Tibial artery (tissue), 4 donors: ENCODE measurements at regions of chr2 and their contacts with region 1.

Region 1: DNA sequence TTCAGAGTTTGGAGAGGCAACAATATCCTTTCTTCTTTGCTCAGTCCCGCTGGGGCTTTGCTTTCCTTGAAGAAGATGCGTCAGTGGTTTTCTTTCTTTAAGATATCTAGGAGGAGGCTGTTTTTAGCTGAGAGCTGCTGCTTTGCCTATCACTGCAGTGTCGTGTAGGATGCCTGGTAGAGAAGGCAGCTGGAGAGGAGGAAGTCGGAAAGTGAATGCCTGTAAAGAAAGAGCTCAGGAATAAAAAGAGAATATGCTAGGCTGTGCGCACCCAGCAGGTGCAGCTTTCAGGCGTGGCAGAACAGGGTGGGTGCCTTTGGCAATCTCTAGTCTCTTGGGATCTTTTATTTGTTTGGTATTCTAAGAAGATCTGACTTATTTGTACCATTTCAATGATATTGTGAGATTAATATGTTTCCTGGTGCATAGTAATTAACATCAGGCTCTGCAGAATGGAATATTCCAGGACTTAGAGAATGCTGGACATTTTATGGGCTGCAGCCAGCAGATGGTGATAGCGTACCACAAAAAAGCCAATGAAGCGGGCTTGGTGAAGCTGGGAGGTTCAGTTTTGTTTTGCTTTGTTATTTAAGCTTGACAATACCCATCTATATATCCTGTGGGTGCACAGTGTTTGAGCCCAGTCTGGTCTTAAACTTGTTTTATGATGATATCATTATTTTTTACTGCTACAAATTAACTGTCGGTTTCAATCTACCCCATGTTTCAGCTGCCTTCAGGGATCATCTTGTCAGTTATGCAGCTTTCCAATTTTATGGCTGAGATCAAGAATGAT is 34.9 kb downstream of the CAVIN2 start:
- DNase-seq: peak in 1 of 2 donors; percentile 53
- H3K4me3 ChIP-seq: peak overlapping the region in 1 of 2 donors; percentile 4
- H3K27ac ChIP-seq: no peak overlapping the region
- H3K4me1 ChIP-seq: no peaks in the 10 kb centered on the region
- H3K27me3 ChIP-seq: no peaks in the 10 kb centered on the region
- CTCF ChIP-seq: peak; percentile 72 to 81

Region 2: DNA sequence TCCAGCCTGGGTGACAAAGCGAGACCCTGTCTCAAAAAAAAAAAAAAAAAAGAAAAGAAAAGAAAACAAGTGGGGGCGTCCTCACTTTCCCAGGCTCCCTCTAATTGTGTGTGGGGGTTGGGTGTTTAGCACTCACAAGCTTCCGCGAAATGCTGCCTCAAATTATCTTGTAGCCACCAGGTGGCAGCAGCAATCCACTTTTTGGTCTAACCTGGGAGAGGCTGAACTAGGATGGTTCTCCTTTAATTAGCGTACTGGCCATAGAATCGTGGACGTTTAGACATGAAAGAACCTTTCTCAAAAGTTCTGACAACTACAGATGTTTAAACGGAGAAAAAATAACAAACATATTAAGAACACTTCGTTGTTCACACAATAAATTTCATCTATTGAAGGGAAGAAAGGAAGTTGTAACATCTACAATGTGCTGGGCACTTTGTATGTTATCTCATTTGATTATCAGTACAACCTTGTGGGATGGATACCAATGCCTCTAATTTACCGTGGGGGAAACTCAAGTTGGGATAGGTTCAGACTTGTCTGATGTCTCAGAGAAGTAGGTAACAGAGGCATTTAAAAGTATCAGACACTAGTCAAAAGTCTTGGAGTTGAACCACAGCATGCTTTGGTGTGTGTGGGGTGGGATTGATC is 256.8 kb before region 1 on chr2:
- intact Hi-C with region 1: loop called (anchors 10 kb)
- DNase-seq: peak; percentile 83 to 85
- H3K4me3 ChIP-seq: no peak overlapping the region
- H3K27ac ChIP-seq: no peak overlapping the region
- H3K4me1 ChIP-seq: peaks cover 0 to 7% (median 0%) of the 10 kb centered on the region in 4 donors
- H3K27me3 ChIP-seq: peaks cover 0 to 5% of the 10 kb centered on the region in 2 donors
- CTCF ChIP-seq: peak; percentile 57 to 67

Region 3: DNA sequence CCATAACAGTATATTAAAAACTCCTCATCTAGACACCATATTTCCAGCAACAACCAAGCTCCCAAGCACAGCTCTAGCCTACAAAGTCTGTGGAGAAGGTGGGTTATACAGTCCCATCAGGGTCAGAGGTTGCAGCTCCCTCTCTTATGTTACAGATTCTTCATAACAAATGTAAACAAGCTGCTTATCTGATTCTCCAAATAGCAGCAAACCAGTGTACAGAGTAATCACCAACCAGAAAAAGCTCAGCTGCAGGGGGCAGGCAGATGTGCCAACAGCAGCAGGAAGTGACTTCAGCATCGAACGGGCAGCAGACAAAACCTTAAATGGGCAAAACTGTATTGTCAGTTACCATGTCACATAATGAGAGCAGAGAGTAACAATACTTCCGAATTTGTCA is 187.0 kb before region 1 on chr2:
- intact Hi-C with region 1: no loop called
- DNase-seq: no peak
- H3K4me3 ChIP-seq: no peak overlapping the region
- H3K27ac ChIP-seq: no peak overlapping the region
- H3K4me1 ChIP-seq: no peaks in the 10 kb centered on the region
- H3K27me3 ChIP-seq: no peaks in the 10 kb centered on the region
- CTCF ChIP-seq: no peak

Region 4: DNA sequence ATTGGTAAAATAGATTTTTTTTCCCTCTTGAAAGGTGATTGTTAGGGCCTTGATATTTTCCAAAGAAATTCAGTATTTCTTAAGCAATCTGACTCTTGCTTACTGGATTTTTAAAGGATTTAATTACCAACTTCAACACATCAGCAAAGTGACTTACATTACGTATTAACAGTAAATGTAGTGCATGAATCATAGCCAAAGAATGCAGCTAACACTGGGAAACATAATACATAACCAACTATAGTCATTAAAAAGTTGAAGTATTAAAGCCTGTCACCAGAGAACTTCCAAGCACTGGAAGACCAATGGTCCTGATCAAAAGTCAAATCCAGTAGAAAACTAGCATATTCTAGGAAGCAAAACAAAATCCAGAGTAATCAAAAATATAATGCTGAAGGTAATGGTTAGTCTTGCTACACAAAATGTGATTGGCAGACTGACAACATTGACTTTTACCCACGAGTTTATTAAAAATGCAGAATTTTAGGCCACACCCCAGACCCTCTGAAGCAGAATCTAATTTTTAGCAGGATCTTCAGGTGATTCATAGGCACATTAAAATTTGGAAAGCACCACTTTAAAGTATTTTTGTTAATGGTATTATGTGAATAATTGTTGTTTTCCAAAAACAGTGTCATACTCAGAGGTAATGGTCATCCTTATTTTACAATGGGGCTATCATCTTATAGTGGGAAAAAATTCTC is 66.7 kb after region 1 on chr2:
- intact Hi-C with region 1: no loop called
- DNase-seq: no peak
- H3K4me3 ChIP-seq: no peak overlapping the region
- H3K27ac ChIP-seq: no peak overlapping the region
- H3K4me1 ChIP-seq: peaks cover 0 to 19% (median 2%) of the 10 kb centered on the region in 4 donors
- H3K27me3 ChIP-seq: no peaks in the 10 kb centered on the region
- CTCF ChIP-seq: no peak

Region 5: GRCh38 chr2:192162392-192163042 is 350.5 kb after region 1 on chr2:
- intact Hi-C with region 1: loop called (anchors 2 kb)
- DNase-seq: peak in 1 of 2 donors; percentile 67
- H3K4me3 ChIP-seq: no peak overlapping the region
- H3K27ac ChIP-seq: no peak overlapping the region
- H3K4me1 ChIP-seq: peaks cover 0 to 4% (median 0%) of the 10 kb centered on the region in 4 donors
- H3K27me3 ChIP-seq: no peaks in the 10 kb centered on the region
- CTCF ChIP-seq: peak; percentile 88 to 96